Calu3 (cell line): ENCODE measurements at regions of chr2 and their contacts with region 1.

Region 1: DNA sequence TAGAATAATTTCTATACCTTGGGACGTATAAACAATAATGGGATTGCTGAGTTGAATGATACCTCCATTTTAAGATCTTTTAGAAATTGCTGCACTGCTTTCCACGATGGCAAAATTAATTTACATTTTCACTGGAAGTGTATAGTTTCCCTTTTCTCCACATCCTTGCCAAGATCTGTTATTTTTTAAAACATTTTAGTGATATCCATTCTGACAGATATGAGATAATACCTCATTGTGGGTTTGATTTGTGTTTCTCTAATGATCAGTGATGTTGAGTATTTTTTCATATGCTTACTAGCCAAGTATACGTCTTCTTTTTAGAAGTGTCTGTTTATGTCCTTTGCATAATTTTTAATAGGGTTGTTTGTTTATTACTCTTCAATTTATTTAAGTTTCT is 908.5 kb upstream of the CNTNAP5 start:
- DNase-seq: no peak
- H3K4me3 Mint-ChIP-seq: no peak overlapping the region
- H3K27ac Mint-ChIP-seq: no peak overlapping the region
- H3K4me1 Mint-ChIP-seq: no peaks in the 10 kb centered on the region
- H3K27me3 Mint-ChIP-seq: no peaks in the 10 kb centered on the region
- CTCF ChIP-seq: no peak

Region 2: DNA sequence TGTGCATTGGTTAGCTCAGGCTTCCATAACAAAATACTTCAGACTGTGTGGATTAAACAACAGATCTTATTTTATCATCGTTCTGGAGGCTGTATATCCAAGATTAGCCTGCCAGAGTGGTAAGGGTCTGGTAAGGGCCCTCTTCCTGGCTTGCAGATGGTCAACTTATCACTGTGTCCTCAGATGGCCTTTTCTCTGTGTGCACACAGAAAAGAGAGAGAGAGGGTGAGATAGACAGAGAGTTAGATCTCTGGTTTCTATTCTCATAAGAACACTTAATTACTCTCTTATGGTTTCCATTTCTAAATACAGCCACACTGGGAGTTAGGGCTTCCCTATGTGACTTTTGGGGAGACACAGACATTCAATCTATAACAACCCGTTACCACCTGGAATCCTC is 357.6 kb before region 1 on chr2:
- CTCF ChIA-PET with region 1: no interaction called
- intact Hi-C with region 1: no loop called
- DNase-seq: no peak
- H3K4me3 Mint-ChIP-seq: no peak overlapping the region
- H3K27ac Mint-ChIP-seq: no peak overlapping the region
- H3K4me1 Mint-ChIP-seq: no peaks in the 10 kb centered on the region
- H3K27me3 Mint-ChIP-seq: no peaks in the 10 kb centered on the region
- CTCF ChIP-seq: no peak

Region 3: DNA sequence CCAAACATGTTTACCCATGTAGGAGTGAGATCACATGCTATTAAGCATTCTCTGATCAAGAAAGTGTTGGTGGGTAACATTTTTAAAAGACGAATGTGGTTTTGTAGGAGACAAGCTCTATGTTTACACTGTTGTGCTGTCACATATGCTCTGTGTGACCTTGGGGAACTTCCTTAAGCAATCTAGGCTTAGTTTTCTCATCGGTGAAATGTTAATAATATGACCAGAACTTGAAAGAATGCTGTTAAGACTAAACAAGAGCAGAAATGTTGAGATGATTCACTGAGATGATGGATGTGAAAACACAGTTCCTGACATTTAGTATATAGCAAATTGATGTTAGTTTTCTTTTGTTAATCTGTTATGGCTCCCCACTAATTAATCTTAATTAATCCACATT is 47.6 kb after region 1 on chr2:
- CTCF ChIA-PET with region 1: no interaction called
- intact Hi-C with region 1: loop called (anchors 2 kb)
- DNase-seq: no peak
- H3K4me3 Mint-ChIP-seq: no peak overlapping the region
- H3K27ac Mint-ChIP-seq: no peak overlapping the region
- H3K4me1 Mint-ChIP-seq: no peaks in the 10 kb centered on the region
- H3K27me3 Mint-ChIP-seq: no peaks in the 10 kb centered on the region
- CTCF ChIP-seq: no peak

Region 4: DNA sequence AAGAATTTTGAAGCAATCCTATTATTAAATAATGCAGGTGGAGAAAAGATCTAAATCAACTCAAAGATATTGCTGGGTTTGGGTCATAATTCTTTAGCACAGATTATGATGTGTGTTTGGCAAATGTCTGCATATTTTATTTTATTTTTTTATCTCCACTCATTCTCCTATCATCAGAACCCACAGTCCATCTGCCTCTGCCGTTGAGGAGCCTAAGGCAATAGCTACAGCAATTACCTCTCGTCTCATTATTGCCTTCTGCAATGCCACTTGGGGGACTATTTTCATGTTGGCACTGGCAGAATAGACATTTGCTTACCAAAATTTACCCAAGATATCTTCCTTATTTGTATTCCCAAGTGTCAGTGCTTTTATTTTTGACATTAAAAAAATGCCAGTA is 92.6 kb after region 1 on chr2:
- CTCF ChIA-PET with region 1: no interaction called
- intact Hi-C with region 1: no loop called
- DNase-seq: no peak
- H3K4me3 Mint-ChIP-seq: no peak overlapping the region
- H3K27ac Mint-ChIP-seq: no peak overlapping the region
- H3K4me1 Mint-ChIP-seq: no peaks in the 10 kb centered on the region
- H3K27me3 Mint-ChIP-seq: no peaks in the 10 kb centered on the region
- CTCF ChIP-seq: no peak